ENCODE measurements at regions of chr4 and their contacts with region 1.

Region 1: DNA sequence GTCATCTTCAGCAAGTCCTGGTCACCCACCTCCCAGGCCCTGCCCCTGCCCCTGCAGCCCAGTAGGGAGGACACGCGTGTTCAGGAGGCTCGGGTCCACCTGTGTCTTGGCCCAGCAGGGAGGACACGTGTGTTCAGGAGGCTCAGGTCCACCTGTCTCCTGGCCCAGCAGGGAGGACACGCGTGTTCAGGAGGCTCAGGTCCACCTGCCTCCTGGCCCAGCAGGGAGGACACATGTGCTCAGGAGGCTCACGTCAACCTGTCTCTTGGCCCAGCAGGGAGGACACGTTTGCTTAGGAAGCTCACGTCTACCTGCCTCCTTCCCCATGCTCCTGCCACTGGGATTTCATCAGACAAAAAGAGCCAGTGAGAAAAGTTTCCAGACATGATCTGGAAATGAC is 44.8 kb downstream of the HTT-AS start:
- DNase-seq: no peak
- H3K4me3 ChIP-seq: no peak overlapping the region
- H3K27ac ChIP-seq: no peak overlapping the region
- H3K4me1 ChIP-seq: no peaks in the 10 kb centered on the region
- H3K27me3 ChIP-seq: no peaks in the 10 kb centered on the region
- CTCF ChIP-seq: no peak
- POLR2A ChIP-seq: no peak

Region 2: DNA sequence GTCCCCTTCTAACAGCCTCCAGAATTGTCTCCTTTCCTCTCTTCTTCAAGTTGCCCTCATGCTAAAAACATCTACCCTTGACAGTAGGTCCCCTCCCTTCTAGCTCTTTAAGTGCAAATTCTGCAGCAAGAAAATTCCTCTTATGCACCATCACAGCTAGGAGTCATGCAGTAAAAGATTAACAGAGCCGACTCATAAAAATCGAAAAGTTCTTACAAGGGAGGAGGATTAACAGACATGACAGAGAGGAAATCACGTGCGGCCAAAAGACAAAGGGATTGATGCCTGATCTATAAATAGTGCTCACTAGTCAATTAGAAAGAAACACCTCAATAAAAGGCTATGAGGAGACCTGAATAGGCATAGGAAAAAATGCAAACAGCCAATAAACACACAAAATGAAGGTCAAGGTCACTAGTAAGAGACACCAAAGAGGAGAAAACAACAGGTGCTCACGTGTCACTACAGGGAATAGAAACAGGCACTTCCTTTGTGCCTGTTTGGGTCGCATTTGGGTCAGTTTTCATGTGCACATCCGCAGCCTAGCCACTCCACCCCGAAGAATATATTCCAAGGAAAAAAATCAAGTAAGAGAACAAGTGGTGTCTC is 1919.5 kb before region 1 on chr4:
- intact Hi-C with region 1: no loop called
- DNase-seq: no peak
- H3K4me3 ChIP-seq: no peak overlapping the region
- H3K27ac ChIP-seq: no peak overlapping the region
- H3K4me1 ChIP-seq: no peaks in the 10 kb centered on the region
- H3K27me3 ChIP-seq: peaks cover 0 to 3% of the 10 kb centered on the region in 2 donors
- CTCF ChIP-seq: no peak
- POLR2A ChIP-seq: no peak

Region 3: DNA sequence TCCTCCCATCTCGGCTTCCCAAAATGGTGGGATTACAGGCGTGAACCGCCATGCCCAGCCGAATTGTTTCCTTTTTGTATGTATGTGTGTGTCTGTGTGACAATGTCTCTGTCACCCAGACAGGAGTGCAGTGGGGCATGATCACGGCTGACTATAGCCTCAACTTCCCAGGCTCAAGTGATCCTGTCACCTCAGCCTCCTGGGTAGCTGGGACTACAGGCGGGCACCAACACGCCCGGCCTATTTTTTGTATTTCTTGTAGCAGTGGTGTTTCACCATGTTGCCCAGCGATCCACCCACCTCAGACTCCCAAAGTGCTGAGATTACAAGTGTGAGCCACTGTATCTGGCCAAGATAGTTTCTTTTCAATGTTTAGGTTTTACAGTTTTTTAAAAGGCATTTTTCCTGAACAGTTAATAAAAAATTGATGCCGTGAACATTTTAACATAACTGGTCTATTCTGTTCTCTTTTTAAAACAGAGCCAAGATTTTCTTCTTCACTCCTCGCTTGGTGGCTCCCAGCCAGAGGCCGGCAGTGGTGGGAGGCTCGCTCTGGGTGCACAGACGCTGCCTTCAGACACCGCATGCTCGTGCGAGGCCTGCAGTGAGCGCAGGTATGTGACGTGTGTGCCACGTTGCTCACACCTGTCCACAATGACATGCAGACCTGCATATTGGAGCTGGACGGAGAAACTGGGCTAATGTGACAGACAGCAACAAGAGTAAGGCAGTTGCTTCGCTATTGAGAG is 404.5 kb before region 1 on chr4:
- intact Hi-C with region 1: no loop called
- DNase-seq: peak in 1 of 2 donors; percentile 31
- H3K4me3 ChIP-seq: peak overlapping the region in 1 of 3 donors; percentile 13
- H3K27ac ChIP-seq: no peak overlapping the region
- H3K4me1 ChIP-seq: no peaks in the 10 kb centered on the region
- H3K27me3 ChIP-seq: no peaks in the 10 kb centered on the region
- CTCF ChIP-seq: no peak
- POLR2A ChIP-seq: no peak

Region 4: GRCh38 chr4:2761035-2761923 is 268.2 kb before region 1 on chr4:
- intact Hi-C with region 1: loop called (anchors 2 kb)
- DNase-seq: peak in 1 of 2 donors; percentile 66
- H3K4me3 ChIP-seq: no peak overlapping the region
- H3K27ac ChIP-seq: peak overlapping the region in 1 of 2 donors; percentile 55
- H3K4me1 ChIP-seq: peaks cover 0 to 4% of the 10 kb centered on the region in 2 donors
- H3K27me3 ChIP-seq: no peaks in the 10 kb centered on the region
- CTCF ChIP-seq: no peak
- POLR2A ChIP-seq: no peak

Region 5: GRCh38 chr4:3077796-3078195 is 48.3 kb after region 1 on chr4:
- intact Hi-C with region 1: no loop called
- DNase-seq: no peak
- H3K4me3 ChIP-seq: no peak overlapping the region
- H3K27ac ChIP-seq: no peak overlapping the region
- H3K4me1 ChIP-seq: no peaks in the 10 kb centered on the region
- H3K27me3 ChIP-seq: no peaks in the 10 kb centered on the region
- CTCF ChIP-seq: no peak
- POLR2A ChIP-seq: no peak

Measured in breast epithelium (tissue), 4 donors.